Activated naive CD8-positive, alpha-beta T cell treated with anti-CD3 and anti-CD28 coated beads, Interleukin-2, amount 10 ng/mL, durations not matched to agents 7 days and 5 days (primary cell): ENCODE measurements at regions of chr2 and their contacts with region 1.

Region 1: DNA sequence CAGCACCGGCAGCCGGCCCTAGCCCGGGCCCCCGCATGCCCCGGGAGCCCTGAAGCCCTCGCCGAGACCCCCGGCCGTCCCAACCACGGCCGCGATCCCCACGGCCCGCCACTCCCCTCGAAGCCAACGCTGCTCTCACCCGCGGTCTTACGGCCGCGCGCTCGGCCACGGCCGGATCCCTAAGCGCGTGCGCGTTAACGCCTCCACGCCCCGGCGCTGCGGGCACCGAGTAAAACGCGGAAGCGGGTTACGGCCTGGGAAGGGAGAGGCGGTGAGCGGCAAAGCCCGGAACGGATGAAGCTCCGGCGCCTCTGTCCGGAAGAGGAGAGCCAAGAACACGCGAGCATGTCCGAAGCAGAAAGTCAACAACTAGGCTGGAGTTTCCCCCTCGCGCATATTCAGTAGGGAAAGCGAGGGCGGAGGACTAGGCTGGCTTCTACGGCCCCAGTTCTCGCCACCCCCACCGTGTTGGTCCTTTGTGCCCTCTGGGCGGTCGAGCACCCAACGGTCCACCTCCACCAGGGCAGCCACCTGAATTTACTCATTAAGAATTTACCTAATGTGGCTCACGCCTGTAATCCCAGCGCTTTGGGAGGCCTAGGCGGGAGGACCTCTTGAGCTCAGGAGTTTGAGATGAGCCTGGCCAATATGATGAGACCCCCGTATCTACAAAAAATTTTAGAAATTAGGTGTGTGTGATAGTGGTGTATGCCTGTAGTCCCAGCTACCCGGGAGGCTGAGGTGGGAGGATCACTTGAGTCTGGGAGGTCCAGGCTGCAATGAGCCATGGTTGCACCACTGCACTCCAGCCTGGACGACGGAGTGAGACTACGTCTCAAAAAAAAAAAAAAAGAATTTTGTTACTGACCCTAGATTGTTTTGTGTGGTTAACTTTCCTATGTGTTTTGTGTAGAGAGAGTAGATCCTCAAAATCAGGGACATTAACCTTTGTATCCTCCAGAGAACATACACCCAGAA is at the start of gene KANSL3:
- DNase-seq: peak; percentile 95
- ATAC-seq: peak; percentile 82
- H3K4me3 Mint-ChIP-seq: peak within 1 kb of the TSS; percentile 94
- H3K27ac Mint-ChIP-seq: peak within 1 kb of the TSS; percentile 90
- H3K4me1 Mint-ChIP-seq: peaks cover 32% of the 10 kb centered on the region
- H3K27me3 Mint-ChIP-seq: peaks cover 9% of the 10 kb centered on the region
- total RNA-seq, gene KANSL3: 63.8 to 69.6 TPM

Region 2: GRCh38 chr2:96594691-96595152 is 43.7 kb before region 1 on chr2:
- POLR2A ChIA-PET with region 1: interaction called, 11 read pairs
- DNase-seq: no peak
- ATAC-seq: peak; percentile 96
- H3K4me3 Mint-ChIP-seq: peak overlapping the region; percentile 50
- H3K27ac Mint-ChIP-seq: peak overlapping the region; percentile 88
- H3K4me1 Mint-ChIP-seq: peaks cover 59% of the 10 kb centered on the region
- H3K27me3 Mint-ChIP-seq: no peaks in the 10 kb centered on the region

Region 3: DNA sequence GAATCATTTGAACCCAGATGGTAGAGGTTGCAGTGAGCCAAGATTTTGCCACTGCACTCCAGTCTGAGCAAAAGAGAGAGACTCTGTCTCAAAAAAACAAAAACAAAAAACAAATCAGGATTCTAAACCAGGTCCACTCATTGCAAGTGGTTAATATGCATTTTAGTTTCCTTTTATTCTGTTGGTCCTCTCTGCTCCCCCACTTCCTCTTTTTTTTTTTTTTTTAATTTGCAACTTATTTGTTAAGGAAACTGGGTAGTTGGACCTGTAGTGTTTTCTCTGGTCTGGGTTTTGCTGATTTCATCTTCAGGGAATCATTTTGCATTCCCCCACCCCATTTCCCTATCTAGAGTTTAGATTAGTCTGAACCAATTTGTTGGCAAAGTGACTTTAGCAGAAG is 18.1 kb after region 1 on chr2:
- POLR2A ChIA-PET with region 1: no interaction called
- DNase-seq: no peak
- ATAC-seq: no peak
- H3K4me3 Mint-ChIP-seq: no peak overlapping the region
- H3K27ac Mint-ChIP-seq: no peak overlapping the region
- H3K4me1 Mint-ChIP-seq: no peaks in the 10 kb centered on the region
- H3K27me3 Mint-ChIP-seq: peaks cover 5% of the 10 kb centered on the region